ENCODE measurements at regions of chr5 and their contacts with region 1.

Region 1: DNA sequence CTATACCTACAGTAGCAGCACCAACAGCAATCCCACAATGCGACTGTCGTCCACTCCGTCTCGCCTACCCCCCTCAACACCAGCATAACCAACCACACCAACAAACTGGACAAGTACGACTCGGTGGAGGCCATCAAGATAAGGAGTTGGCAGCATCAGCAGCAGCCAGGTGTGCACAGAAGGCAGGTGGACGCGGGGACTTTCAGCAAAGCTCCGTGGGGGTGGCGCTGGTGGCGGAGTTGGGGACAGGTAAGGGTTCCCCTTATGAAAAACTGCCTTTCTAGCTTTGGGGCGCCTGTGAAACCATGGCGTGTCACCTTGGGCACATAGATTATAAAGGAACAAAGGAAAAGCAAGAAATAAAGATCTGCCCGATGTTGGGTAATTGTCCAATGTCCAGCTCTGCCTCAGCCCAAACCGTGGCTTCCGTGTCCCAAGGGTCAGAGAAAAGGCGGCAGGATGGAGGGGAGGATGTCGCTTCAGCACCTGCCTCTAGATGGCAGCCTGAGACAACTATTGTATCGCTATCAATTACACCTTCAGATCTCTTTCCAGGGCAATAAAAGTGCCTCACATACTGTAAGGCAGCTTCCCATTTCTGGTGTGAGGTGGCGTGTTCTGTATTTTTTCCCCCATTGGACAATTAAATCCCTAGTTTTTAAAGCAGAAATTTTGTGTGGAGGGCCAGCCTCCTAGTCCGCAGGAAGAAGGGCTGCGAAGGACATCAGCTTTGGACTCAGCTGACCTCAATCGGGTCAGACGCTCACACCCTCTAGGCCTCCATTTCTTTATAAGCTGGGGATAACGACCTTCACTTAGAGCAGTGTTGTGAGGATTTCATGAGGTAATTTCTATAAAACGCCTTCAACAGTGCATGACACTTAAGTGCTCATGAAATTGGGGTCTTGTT is 58.8 kb downstream of the MTRR start:
- DNase-seq: peak in 6 of 9 donors; percentile 2 to 36 (median 14)
- ATAC-seq: peak; percentile 58
- H3K4me3 ChIP-seq: no peak overlapping the region
- H3K4me3 Mint-ChIP-seq: no peak overlapping the region
- H3K27ac ChIP-seq: no peak overlapping the region
- H3K27ac Mint-ChIP-seq: no peak overlapping the region
- H3K4me1 ChIP-seq: no peaks in the 10 kb centered on the region
- H3K4me1 Mint-ChIP-seq: peaks cover 0 to 4% (median 0%) of the 10 kb centered on the region in 7 donors
- H3K27me3 ChIP-seq: no peaks in the 10 kb centered on the region
- H3K27me3 Mint-ChIP-seq: peaks cover 2 to 21% (median 10%) of the 10 kb centered on the region in 5 donors

Region 2: DNA sequence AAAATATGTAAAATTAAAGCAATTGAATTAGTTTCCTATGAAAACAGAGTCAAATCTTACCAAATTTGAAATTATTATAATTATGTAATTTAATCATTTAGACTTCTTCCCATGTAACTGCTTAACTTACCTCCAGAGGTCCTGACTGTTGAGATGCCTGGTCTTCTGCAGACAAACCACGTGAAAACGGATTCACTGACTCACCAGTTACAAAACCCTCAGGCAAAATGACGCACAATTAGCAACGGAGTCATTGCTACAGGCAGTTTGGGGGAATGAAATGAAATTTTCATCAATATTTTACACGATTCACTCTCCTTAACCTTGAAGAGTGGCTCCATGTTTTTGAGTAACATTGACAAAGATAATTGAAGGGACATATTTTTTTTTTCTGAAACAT is 402.1 kb after region 1 on chr5:
- CTCF ChIA-PET with region 1: no interaction called
- POLR2A ChIA-PET with region 1: no interaction called
- intact Hi-C with region 1: no loop called
- DNase-seq: no peak
- ATAC-seq: no peak
- H3K4me3 ChIP-seq: no peak overlapping the region
- H3K4me3 Mint-ChIP-seq: no peak overlapping the region
- H3K27ac ChIP-seq: no peak overlapping the region
- H3K27ac Mint-ChIP-seq: no peak overlapping the region
- H3K4me1 ChIP-seq: no peaks in the 10 kb centered on the region
- H3K4me1 Mint-ChIP-seq: no peaks in the 10 kb centered on the region
- H3K27me3 ChIP-seq: no peaks in the 10 kb centered on the region
- H3K27me3 Mint-ChIP-seq: peaks cover 0 to 7% (median 4%) of the 10 kb centered on the region in 5 donors

Region 3: GRCh38 chr5:9207817-9208418 is 1280.2 kb after region 1 on chr5:
- CTCF ChIA-PET with region 1: no interaction called
- POLR2A ChIA-PET with region 1: no interaction called
- intact Hi-C with region 1: loop called (anchors 1 to 5 kb)
- DNase-seq: no peak
- ATAC-seq: no peak
- H3K4me3 ChIP-seq: no peak overlapping the region
- H3K4me3 Mint-ChIP-seq: no peak overlapping the region
- H3K27ac ChIP-seq: no peak overlapping the region
- H3K27ac Mint-ChIP-seq: no peak overlapping the region
- H3K4me1 ChIP-seq: no peaks in the 10 kb centered on the region
- H3K4me1 Mint-ChIP-seq: no peaks in the 10 kb centered on the region
- H3K27me3 ChIP-seq: no peaks in the 10 kb centered on the region
- H3K27me3 Mint-ChIP-seq: peaks cover 0 to 5% (median 0%) of the 10 kb centered on the region in 5 donors

Measured in naive thymus-derived CD4-positive, alpha-beta T cell (primary cell).